Ascending aorta (tissue), 2 donors: ENCODE measurements at regions of chr1 and their contacts with region 1.

Region 1: DNA sequence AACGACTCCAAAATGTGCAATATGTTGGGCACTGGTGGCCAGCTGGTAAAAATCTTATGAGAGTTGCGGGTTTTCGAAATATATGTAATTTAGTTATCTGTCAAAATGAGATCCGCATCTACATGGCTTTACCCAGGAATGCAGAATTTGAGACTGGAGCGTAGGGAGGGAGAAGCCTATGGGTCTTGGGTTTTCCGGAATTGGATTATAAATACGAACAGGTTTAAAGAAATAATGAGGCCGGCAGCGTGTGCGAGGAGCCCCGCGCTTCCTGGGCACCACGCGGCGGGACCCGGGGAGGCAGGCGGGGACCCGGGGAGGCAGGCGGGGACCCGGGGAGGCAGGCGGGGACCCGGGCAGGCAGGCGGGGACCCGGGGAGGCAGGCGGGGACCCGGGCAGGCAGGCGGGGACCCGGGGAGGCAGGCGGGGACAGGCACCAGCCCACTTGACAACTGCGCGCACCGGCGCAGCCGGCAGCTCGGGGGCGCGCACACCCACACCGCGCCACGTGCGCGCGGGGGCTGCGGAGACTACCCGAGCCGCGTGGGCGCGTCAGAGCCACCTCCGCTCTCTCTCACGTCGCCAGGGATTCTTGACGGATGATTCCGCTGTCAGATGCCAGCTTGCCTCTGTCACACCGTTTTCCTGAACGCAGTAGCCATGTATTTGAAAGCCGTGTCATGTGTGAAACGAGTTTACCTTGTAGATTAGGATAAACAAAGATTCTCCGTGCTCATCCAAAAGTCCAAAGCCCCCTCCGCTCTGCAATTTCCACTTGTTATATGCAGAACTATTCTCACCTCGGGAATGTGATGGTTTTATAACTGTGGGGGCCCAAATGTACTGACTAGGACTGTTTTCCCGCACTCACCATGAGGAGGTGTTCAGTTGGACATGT is 54.3 kb upstream of the HNRNPU start:
- DNase-seq: peak in 1 of 2 donors; percentile 68
- H3K4me3 ChIP-seq: peak overlapping the region; percentile 63 to 70
- H3K27ac ChIP-seq: no peak overlapping the region
- H3K4me1 ChIP-seq: no peaks in the 10 kb centered on the region
- H3K27me3 ChIP-seq: no peaks in the 10 kb centered on the region
- CTCF ChIP-seq: peak in 1 of 3 experiments; percentile 6

Region 2: GRCh38 chr1:244964112-244964971 is 45.7 kb after region 1 on chr1:
- intact Hi-C with region 1: loop called (anchors 2 kb)
- DNase-seq: peak in 1 of 2 donors; percentile 72
- H3K4me3 ChIP-seq: peak overlapping the region; percentile 2 to 55
- H3K27ac ChIP-seq: peak overlapping the region; percentile 84 to 90
- H3K4me1 ChIP-seq: peaks cover 6 to 37% of the 10 kb centered on the region in 2 donors
- H3K27me3 ChIP-seq: no peaks in the 10 kb centered on the region
- CTCF ChIP-seq: no peak

Region 3: DNA sequence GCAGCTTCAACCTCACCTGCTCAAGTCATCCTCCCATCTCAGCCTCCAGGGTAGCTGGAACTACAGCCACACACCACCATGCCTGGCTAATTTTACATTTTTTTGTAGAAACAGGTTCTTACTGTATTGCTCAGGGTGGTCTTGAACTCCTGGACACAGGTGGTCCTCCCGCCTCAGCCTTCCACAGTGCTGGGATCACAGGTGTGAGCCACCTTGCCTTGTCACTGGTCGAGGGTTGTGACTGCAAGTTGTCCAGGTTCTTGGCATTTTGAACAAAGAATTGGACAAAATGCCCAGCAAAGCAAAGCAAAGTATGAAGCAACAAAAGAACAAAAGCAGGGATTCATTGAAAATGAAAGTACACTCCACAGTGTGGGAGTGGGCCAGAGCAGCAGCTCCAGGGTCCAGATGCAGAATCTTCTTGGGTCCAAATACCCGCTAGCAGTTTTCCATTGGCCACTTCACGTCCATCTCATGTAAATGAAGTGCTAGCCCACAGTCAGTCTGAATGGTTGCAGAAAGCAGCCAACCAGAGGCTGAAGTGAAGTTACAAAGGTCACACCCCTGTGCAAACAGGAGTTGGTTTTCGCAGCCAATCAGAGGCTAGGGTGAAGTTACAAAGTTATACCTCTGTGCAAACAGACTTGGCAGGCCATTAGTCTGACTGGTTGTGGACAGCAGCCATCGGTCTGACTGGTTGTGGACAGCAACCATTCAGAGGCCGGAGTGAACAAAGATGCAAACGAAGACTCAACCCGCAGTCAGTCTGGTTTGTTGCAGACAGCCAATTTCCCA is 126.6 kb after region 1 on chr1:
- intact Hi-C with region 1: no loop called
- DNase-seq: no peak
- H3K4me3 ChIP-seq: peak overlapping the region in 1 of 2 donors; percentile 35
- H3K27ac ChIP-seq: no peak overlapping the region
- H3K4me1 ChIP-seq: no peaks in the 10 kb centered on the region
- H3K27me3 ChIP-seq: no peaks in the 10 kb centered on the region
- CTCF ChIP-seq: no peak